GM10248 (cell line): ENCODE measurements at regions of chr2 and their contacts with region 1.

Region 1: DNA sequence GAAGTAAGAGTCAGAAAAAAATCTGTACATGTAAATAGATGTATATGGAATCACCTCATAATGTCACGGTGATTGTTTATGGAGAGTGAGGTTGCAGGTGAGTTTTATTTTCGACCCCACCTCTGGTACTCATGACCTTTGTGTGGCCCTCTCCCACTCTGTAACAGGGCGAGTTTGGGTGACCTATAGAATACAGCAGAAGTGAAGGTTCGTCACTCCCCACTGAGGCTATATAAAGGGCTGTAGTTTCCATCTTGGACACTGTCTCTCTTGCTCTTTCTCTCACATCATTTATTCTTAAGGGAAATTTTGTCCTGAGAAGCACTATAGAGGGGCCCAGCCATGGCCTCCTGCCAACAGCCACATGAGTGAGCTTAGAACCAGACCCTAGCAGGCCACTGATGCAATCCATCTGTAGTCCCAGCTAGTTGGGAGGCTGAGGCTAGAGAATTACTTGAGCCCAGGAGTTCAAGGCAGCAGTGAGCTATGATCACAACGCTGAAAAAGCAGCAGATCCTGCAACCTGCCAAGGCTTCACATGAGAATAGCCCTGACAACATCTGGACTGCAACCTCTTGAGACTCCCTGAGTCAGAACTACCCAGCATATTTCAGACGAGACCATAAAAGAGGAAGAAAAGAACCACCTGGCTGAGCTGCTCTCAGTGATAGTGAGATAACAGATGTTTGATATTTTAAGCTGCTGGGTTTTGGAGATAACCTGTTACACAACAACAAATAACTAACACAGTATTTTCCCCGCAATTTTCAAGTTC is 74.3 kb upstream of the SLC1A4 start:
- DNase-seq: peak; percentile 72
- CTCF ChIP-seq: no peak

Region 2: DNA sequence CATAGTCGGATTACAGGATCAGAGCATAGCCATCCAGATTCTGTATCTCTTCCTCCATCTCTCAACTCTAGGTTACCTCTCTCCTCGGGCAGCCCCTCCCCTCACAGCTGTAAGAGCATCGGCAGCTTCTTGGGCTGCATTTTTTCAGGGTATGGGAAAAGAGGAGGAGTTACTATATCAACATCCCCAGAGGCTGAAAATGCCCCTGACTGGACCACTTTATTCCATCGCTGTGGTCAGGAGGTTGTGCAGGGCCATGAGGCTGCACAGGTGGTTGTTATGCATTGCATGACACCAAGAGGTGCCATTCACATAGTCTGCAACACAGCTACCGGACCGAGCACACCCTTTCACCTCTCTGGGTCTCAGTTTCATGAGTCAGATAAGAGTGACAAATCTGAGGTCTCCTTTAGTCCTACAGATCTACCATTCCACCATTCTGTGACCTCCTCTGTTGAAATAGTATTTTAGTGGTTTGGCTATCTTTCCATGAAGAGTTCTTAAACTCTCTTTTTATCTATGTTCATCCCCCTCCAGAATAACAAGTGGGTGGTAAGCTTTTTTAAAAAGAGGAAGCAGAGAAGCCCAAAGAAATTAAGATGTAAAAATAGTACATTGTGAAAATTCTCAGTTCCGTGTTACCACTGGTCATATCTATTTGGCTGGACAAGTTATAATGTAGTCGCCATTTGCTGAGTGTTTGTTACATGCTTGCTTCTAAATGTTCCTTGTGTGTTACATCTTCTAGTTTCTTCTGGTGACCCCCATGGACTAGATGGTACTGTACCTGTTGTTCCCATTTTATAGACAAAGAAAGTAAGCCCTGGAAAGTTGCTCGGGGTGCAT is 17.7 kb after region 1 on chr2:
- CTCF ChIA-PET with region 1: interaction called, 277 read pairs
- POLR2A ChIA-PET with region 1: interaction called, 4 read pairs
- DNase-seq: peak; percentile 71
- CTCF ChIP-seq: no peak

Region 3: DNA sequence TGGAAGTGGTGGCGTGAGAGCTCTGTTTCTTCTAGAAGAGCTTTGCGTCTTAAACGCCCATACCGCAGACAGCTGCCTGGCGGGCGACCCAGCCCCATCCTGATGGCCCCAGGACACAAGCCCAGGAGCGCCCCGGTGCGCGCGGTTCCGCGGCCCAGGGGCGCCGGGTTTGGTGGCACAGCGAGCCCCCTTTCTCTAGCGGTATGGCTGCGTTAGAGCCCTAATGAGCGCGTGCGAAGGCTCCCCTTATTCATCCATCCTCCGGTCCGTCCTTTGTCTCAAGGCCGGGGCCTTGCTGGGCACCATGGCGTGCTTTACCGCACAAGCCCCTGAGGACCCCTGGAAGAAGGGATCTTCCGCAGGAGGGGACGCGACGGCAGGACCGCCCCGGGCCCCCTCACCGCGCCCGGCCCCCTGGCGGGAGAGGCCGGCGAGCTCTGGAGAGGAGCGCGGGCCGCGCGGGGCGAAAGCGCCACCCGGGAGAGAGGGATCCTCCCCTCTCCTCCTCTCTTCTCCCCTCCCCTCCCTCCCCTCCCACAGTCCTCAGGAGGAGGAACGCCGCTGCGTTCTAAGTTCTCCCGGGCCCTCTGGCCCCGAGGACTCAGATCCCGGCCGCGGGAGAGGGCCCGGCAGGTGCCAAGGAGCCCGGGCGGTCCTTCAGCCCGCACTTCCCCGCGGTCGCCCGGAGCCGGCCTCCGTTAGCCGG is 73.7 kb after region 1 on chr2:
- CTCF ChIA-PET with region 1: interaction called, 92 read pairs
- POLR2A ChIA-PET with region 1: interaction called, 28 read pairs
- DNase-seq: peak; percentile 65
- CTCF ChIP-seq: peak; percentile 27

Region 4: GRCh38 chr2:65024149-65024829 is 109.4 kb after region 1 on chr2:
- CTCF ChIA-PET with region 1: interaction called, 11 read pairs
- POLR2A ChIA-PET with region 1: no interaction called
- DNase-seq: no peak
- CTCF ChIP-seq: no peak

Region 5: GRCh38 chr2:65040400-65041261 is 125.7 kb after region 1 on chr2:
- CTCF ChIA-PET with region 1: interaction called, 21 read pairs
- POLR2A ChIA-PET with region 1: no interaction called
- DNase-seq: peak; percentile 78
- CTCF ChIP-seq: peak; percentile 90